ENCODE measurements at regions of chr13 and their contacts with region 1.

Region 1: GRCh38 chr13:95834134-95834765 is 157.3 kb downstream of the DNAJC3 start:
- DNase-seq: peak; percentile 28
- ATAC-seq: peak; percentile 97
- H3K4me3 ChIP-seq: no peak overlapping the region
- H3K27ac ChIP-seq: no peak overlapping the region
- H3K4me1 ChIP-seq: no peaks in the 10 kb centered on the region
- H3K27me3 ChIP-seq: no peaks in the 10 kb centered on the region
- CTCF ChIP-seq: peak; percentile 89 to 98 (median 94)
- EP300 ChIP-seq: no peak
- POLR2A ChIP-seq: no peak
- RAD21 ChIP-seq: peak; percentile 96

Region 2: DNA sequence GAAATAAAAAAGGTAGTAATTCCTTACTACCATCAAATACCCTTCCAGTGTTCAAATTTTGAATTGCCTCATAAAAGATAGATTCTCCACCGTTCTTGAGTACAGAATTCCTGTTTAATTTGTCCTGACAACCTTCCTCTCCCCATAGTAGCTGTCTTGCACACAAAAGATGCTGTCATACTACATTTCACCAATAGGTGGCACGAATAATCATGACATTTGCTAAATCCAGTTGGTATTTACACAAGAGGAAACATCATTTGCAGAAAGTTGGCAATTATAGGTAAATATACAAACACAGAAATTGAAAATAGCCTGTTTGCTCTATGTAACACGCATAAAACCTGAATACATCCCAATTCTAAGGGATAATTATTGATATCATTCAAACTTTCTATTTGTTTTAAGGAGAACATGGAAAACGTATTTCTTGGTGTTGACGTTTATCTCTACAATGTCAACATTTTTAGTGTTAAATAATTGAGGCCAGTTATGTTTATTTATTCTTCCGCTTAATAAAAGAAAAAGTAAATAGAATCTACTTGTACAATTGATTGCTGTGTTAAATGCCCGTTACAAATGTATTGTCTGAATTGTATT is 340.1 kb before region 1 on chr13:
- CTCF ChIA-PET with region 1: interaction called, 25 read pairs
- POLR2A ChIA-PET with region 1: no interaction called
- RAD21 ChIA-PET with region 1: interaction called, 5 read pairs
- SMC1A ChIA-PET with region 1: interaction called, 3 read pairs
- in situ Hi-C with region 1: no loop called
- intact Hi-C with region 1: loop called (anchors 2 kb)
- DNase-seq: no peak
- ATAC-seq: peak; percentile 76
- H3K4me3 ChIP-seq: no peak overlapping the region
- H3K27ac ChIP-seq: no peak overlapping the region
- H3K4me1 ChIP-seq: no peaks in the 10 kb centered on the region
- H3K27me3 ChIP-seq: no peaks in the 10 kb centered on the region; a peak in 1 of 4 replicates
- CTCF ChIP-seq: peak; percentile 65 to 72 (median 69)
- EP300 ChIP-seq: no peak
- POLR2A ChIP-seq: no peak
- RAD21 ChIP-seq: peak; percentile 65

Region 3: DNA sequence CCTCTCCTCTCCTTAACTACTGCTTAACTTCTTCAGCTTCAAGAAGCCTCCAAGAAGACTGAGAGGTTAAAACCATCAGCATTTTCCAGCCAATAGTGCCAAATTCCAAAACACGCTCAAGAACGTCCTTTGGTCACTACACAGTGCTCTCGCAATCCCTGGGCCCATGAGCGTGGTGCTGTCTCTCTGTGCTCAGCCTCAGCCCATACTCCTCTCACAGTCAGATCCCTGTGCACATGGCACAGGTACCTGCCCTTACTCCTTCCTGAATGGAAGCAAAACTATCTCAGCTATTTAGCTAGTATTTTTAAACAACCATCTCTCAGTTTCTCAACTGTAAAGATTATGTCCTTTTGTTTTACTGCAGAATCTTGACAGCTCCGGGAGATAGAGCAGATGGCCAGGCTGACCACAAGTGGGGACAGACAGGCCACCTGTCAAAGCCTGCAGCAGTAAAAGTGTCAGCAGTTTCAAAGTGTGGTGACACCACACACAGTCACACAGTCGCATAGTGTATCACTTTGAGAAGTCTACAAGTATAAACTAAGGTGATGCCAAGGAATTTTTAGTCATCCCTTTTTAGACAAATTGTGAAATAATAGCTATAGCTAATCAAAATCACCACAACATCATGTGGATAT is 225.5 kb before region 1 on chr13:
- CTCF ChIA-PET with region 1: interaction called, 14 read pairs
- POLR2A ChIA-PET with region 1: no interaction called
- RAD21 ChIA-PET with region 1: no interaction called
- SMC1A ChIA-PET with region 1: no interaction called
- in situ Hi-C with region 1: loop called (anchors 25 kb)
- intact Hi-C with region 1: no loop called
- DNase-seq: no peak
- ATAC-seq: peak; percentile 69
- H3K4me3 ChIP-seq: no peak overlapping the region
- H3K27ac ChIP-seq: no peak overlapping the region
- H3K4me1 ChIP-seq: peaks cover 3% of the 10 kb centered on the region; the same call in 1 of the 2 replicates
- H3K27me3 ChIP-seq: peaks cover 0 to 2% of the 10 kb centered on the region in 2 experiments; a peak in 2 of 4 replicates
- CTCF ChIP-seq: no peak
- EP300 ChIP-seq: no peak
- POLR2A ChIP-seq: no peak
- RAD21 ChIP-seq: no peak

Region 4: GRCh38 chr13:95660981-95661581 is 173.2 kb before region 1 on chr13:
- CTCF ChIA-PET with region 1: interaction called, 12 read pairs
- POLR2A ChIA-PET with region 1: no interaction called
- RAD21 ChIA-PET with region 1: interaction called, 6 read pairs
- SMC1A ChIA-PET with region 1: interaction called, 12 read pairs
- in situ Hi-C with region 1: no loop called
- intact Hi-C with region 1: loop called (anchors 5 kb)
- DNase-seq: no peak
- ATAC-seq: peak; percentile 53; the same call in 2 of the 3 replicates
- H3K4me3 ChIP-seq: no peak overlapping the region
- H3K27ac ChIP-seq: no peak overlapping the region
- H3K4me1 ChIP-seq: no peaks in the 10 kb centered on the region
- H3K27me3 ChIP-seq: no peaks in the 10 kb centered on the region
- CTCF ChIP-seq: peak; percentile 50 to 60 (median 54)
- EP300 ChIP-seq: no peak
- POLR2A ChIP-seq: no peak
- RAD21 ChIP-seq: peak; percentile 68

Region 5: GRCh38 chr13:95813139-95813538 is 21.1 kb before region 1 on chr13:
- CTCF ChIA-PET with region 1: interaction called, 4 read pairs
- POLR2A ChIA-PET with region 1: no interaction called
- RAD21 ChIA-PET with region 1: no interaction called
- SMC1A ChIA-PET with region 1: interaction called, 21 read pairs
- in situ Hi-C with region 1: no loop called
- intact Hi-C with region 1: no loop called
- DNase-seq: no peak
- ATAC-seq: no peak
- H3K4me3 ChIP-seq: no peak overlapping the region
- H3K27ac ChIP-seq: no peak overlapping the region
- H3K4me1 ChIP-seq: no peaks in the 10 kb centered on the region
- H3K27me3 ChIP-seq: no peaks in the 10 kb centered on the region
- CTCF ChIP-seq: no peak
- EP300 ChIP-seq: no peak
- POLR2A ChIP-seq: no peak
- RAD21 ChIP-seq: no peak

Region 6: GRCh38 chr13:95982144-95982543 is 147.9 kb after region 1 on chr13:
- CTCF ChIA-PET with region 1: interaction called, 8 read pairs
- POLR2A ChIA-PET with region 1: no interaction called
- RAD21 ChIA-PET with region 1: interaction called, 11 read pairs
- SMC1A ChIA-PET with region 1: interaction called, 3 read pairs
- in situ Hi-C with region 1: no loop called
- intact Hi-C with region 1: loop called (anchors 1 kb)
- DNase-seq: no peak
- ATAC-seq: no peak
- H3K4me3 ChIP-seq: no peak overlapping the region
- H3K27ac ChIP-seq: no peak overlapping the region
- H3K4me1 ChIP-seq: no peaks in the 10 kb centered on the region
- H3K27me3 ChIP-seq: no peaks in the 10 kb centered on the region
- CTCF ChIP-seq: no peak
- EP300 ChIP-seq: no peak
- POLR2A ChIP-seq: no peak
- RAD21 ChIP-seq: no peak